Dendritic cell treated with granulocyte-macrophage colony-stimulating factor and Interleukin-4, amounts not matched to agents 40 ng/mL and 50 ng/mL, for 4 days (primary cell): ENCODE measurements at regions of chr12 and their contacts with region 1.

Region 1: GRCh38 chr12:88638966-88639760 is 58.9 kb upstream of the KITLG start:
- H3K4me3 Mint-ChIP-seq: peak overlapping the region; percentile 37
- H3K27ac Mint-ChIP-seq: peak overlapping the region; percentile 56
- H3K4me1 Mint-ChIP-seq: peaks cover 12% of the 10 kb centered on the region
- H3K27me3 Mint-ChIP-seq: peaks cover 3% of the 10 kb centered on the region

Region 2: GRCh38 chr12:88141770-88142609 is 497.2 kb before region 1 on chr12 and contains the starts of genes CEP290 and TMTC3:
- intact Hi-C with region 1: loop called (anchors 5 kb)
- H3K4me3 Mint-ChIP-seq: peak within 1 kb of the TSS; percentile 86
- H3K27ac Mint-ChIP-seq: peak within 1 kb of the TSS; percentile 85
- H3K4me1 Mint-ChIP-seq: peaks cover 20% of the 10 kb centered on the region
- H3K27me3 Mint-ChIP-seq: no peaks in the 10 kb centered on the region

Region 3: DNA sequence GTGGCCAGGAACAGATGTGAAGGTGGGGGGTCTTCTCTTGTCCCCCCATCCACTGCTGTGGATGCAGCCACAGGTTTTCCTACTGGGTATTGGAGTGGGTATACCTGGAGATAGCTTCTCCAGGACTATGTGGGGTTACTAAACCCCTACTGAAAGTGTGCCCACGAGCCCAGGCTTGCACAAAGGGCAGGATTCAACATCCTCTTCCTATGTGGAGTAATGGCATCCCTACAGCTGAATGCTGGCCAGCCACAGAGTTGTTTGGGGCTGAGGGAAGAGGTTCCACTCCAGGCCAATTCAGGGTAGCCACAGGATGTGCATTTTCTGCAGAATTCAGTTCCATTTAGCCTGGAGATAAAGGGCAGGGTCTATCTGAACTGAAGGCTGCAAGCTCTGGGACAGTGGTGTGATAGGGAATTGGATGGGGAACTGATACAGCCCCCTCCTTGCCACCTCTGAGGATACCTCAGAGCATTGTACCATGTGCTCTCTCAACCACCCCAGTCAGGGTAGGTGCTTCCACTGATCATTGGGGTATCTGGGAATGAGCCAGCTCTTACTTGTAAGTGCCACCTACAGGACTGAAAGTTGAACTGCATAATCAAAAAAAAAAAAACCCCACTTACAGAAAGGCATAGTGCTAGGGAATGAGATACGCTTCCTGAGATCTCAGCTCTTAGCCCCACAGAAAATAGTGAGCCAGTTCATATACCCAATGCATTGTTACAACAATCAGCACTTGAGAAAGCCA is 246.0 kb before region 1 on chr12:
- intact Hi-C with region 1: no loop called
- H3K4me3 Mint-ChIP-seq: no peak overlapping the region
- H3K27ac Mint-ChIP-seq: no peak overlapping the region
- H3K4me1 Mint-ChIP-seq: peaks cover 18% of the 10 kb centered on the region
- H3K27me3 Mint-ChIP-seq: peaks cover 3% of the 10 kb centered on the region

Region 4: GRCh38 chr12:88580051-88580871 is 58.9 kb before region 1 on chr12 and contains the start of gene KITLG:
- intact Hi-C with region 1: loop called (anchors 5 kb)
- H3K4me3 Mint-ChIP-seq: peak within 1 kb of the TSS; percentile 78
- H3K27ac Mint-ChIP-seq: peak within 1 kb of the TSS; percentile 11
- H3K4me1 Mint-ChIP-seq: peaks cover 12% of the 10 kb centered on the region
- H3K27me3 Mint-ChIP-seq: peaks cover 46% of the 10 kb centered on the region

Region 5: GRCh38 chr12:88716240-88716639 is 77.1 kb after region 1 on chr12:
- intact Hi-C with region 1: no loop called
- H3K4me3 Mint-ChIP-seq: no peak overlapping the region
- H3K27ac Mint-ChIP-seq: no peak overlapping the region
- H3K4me1 Mint-ChIP-seq: no peaks in the 10 kb centered on the region
- H3K27me3 Mint-ChIP-seq: no peaks in the 10 kb centered on the region